HEK293T (cell line): ENCODE measurements at regions of chr17 and their contacts with region 1.

Region 1: GRCh38 chr17:82037113-82037888 is at the start of gene DCXR:
- DNase-seq: peak; percentile 94

Region 2: DNA sequence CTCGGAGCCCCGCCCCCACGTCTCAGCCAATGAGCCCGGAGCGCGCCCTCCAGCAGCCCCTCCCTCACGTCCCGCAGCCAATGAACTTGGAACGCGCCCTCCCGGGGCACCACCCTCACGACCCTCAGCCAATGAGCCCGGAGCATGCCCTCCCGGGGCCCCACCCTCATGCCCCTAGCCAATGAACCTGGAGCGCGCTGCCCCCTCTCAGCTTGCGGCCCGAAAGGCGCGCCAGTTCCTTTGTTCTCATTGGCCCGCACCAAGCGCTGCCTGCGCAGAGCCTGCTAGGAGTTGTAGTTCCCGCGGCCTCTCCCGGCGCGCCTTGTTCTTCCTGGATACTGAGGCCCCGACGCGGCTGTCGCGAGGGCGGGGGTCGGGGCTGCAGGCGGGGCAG is 14.3 kb before region 1 on chr17 and contains the start of gene LRRC45:
- CTCF ChIA-PET with region 1: interaction called, 17 read pairs
- POLR2A ChIA-PET with region 1: interaction called, 22 read pairs
- DNase-seq: peak; percentile 97

Region 3: GRCh38 chr17:82051776-82052637 is 14.7 kb after region 1 on chr17 and contains the starts of genes GPS1 and RFNG:
- CTCF ChIA-PET with region 1: interaction called, 5 read pairs
- POLR2A ChIA-PET with region 1: interaction called, 17 read pairs
- DNase-seq: peak; percentile 85

Region 4: GRCh38 chr17:82098072-82098821 is 60.9 kb after region 1 on chr17 and contains the start of gene FASN:
- CTCF ChIA-PET with region 1: interaction called, 4 read pairs
- POLR2A ChIA-PET with region 1: interaction called, 34 read pairs
- DNase-seq: peak; percentile 99